ENCODE measurements at regions of chr7 and their contacts with region 1.

Region 1: GRCh38 chr7:155769701-155770100 is 42.6 kb downstream of the SHH start:
- DNase-seq: no peak
- H3K4me3 ChIP-seq: no peak overlapping the region
- H3K27ac ChIP-seq: no peak overlapping the region
- H3K4me1 ChIP-seq: peaks cover 0 to 8% of the 10 kb centered on the region in 2 experiments; a peak in 1 of 4 replicates
- H3K27me3 ChIP-seq: no peaks in the 10 kb centered on the region
- CTCF ChIP-seq: no peak
- EP300 ChIP-seq: no peak
- RAD21 ChIP-seq: no peak

Region 2: GRCh38 chr7:155746188-155746587 is 23.5 kb before region 1 on chr7:
- CTCF ChIA-PET with region 1: interaction called, 16 read pairs
- POLR2A ChIA-PET with region 1: no interaction called
- DNase-seq: no peak
- H3K4me3 ChIP-seq: no peak overlapping the region
- H3K27ac ChIP-seq: no peak overlapping the region
- H3K4me1 ChIP-seq: peaks cover 0 to 2% of the 10 kb centered on the region in 2 experiments; a peak in 1 of 4 replicates
- H3K27me3 ChIP-seq: no peaks in the 10 kb centered on the region
- CTCF ChIP-seq: no peak
- EP300 ChIP-seq: no peak
- RAD21 ChIP-seq: no peak